ENCODE measurements at regions of chr6 and their contacts with region 1.

Region 1: GRCh38 chr6:52826513-52826912 is 14.1 kb downstream of the GSTA5 start:
- H3K4me3 Mint-ChIP-seq: no peak overlapping the region
- H3K27ac Mint-ChIP-seq: no peak overlapping the region
- H3K4me1 Mint-ChIP-seq: no peaks in the 10 kb centered on the region
- H3K27me3 Mint-ChIP-seq: no peaks in the 10 kb centered on the region

Region 2: GRCh38 chr6:52760105-52760765 is 66.3 kb before region 1 on chr6:
- intact Hi-C with region 1: no loop called
- H3K4me3 Mint-ChIP-seq: no peak overlapping the region
- H3K27ac Mint-ChIP-seq: no peak overlapping the region
- H3K4me1 Mint-ChIP-seq: no peaks in the 10 kb centered on the region
- H3K27me3 Mint-ChIP-seq: peaks cover 2% of the 10 kb centered on the region

Region 3: GRCh38 chr6:52787917-52788316 is 38.6 kb before region 1 on chr6:
- intact Hi-C with region 1: loop called (anchors 2 kb)
- H3K4me3 Mint-ChIP-seq: no peak overlapping the region
- H3K27ac Mint-ChIP-seq: no peak overlapping the region
- H3K4me1 Mint-ChIP-seq: no peaks in the 10 kb centered on the region
- H3K27me3 Mint-ChIP-seq: no peaks in the 10 kb centered on the region

Region 4: GRCh38 chr6:53244958-53245357 is 418.4 kb after region 1 on chr6:
- intact Hi-C with region 1: no loop called
- H3K4me3 Mint-ChIP-seq: no peak overlapping the region
- H3K27ac Mint-ChIP-seq: peak overlapping the region; percentile 66
- H3K4me1 Mint-ChIP-seq: peaks cover 44% of the 10 kb centered on the region
- H3K27me3 Mint-ChIP-seq: no peaks in the 10 kb centered on the region

Measured in dendritic cell treated with granulocyte-macrophage colony-stimulating factor and Interleukin-4, amounts not matched to agents 40 ng/mL and 50 ng/mL, for 4 days (primary cell).